Activated naive CD4-positive, alpha-beta T cell treated with anti-CD3 and anti-CD28 coated beads, Interleukin-2, amount 10 ng/mL, durations not matched to agents 7 days and 5 days (primary cell): ENCODE measurements at regions of chr10 and their contacts with region 1.

Region 1: DNA sequence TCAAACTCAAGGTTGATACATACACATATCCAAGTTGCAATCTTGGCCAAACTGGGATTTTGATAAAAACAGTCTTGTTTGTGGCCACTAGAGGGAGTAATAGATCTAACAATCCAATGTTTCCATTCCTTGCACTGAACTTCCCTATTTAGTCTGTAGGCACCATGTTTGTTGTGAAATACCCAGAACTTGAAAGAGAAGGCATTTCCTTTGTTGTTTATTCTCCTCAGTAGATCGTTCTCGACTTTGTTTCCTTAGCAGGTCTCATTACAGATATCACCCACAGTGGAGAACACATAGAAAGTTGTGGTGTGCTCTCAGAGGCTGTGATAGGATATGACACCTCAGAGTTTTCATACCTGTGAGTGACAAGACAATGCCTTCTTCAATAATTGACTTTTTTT is 70.3 kb upstream of the MXI1 start:
- DNase-seq: no peak
- H3K4me3 Mint-ChIP-seq: no peak overlapping the region
- H3K27ac Mint-ChIP-seq: peak overlapping the region; percentile 31
- H3K4me1 Mint-ChIP-seq: peaks cover 39% of the 10 kb centered on the region
- H3K27me3 Mint-ChIP-seq: no peaks in the 10 kb centered on the region

Region 2: GRCh38 chr10:109883859-109884771 is 253.0 kb before region 1 on chr10:
- CTCF ChIA-PET with region 1: interaction called, 10 read pairs
- DNase-seq: peak; percentile 71
- H3K4me3 Mint-ChIP-seq: no peak overlapping the region
- H3K27ac Mint-ChIP-seq: no peak overlapping the region
- H3K4me1 Mint-ChIP-seq: peaks cover 9% of the 10 kb centered on the region
- H3K27me3 Mint-ChIP-seq: no peaks in the 10 kb centered on the region

Region 3: DNA sequence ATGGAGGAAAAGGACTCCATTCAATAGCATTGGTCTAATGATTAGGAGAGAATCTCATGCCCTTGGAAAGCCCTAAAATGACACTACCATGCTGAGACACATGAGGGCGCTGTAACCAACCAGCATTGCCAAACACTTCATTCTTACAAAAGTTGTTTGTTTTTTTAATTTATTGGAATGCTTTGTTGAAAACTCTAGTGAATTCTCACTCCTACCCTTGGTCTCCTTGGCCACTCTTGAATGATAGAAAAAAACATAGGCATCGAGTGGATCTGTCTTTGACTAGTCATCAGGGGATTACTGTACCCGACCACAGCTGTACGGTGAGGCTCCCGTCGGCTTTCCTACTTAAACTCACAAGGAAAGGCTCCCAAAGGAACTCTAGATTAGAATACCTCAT is 158.7 kb before region 1 on chr10:
- CTCF ChIA-PET with region 1: interaction called, 16 read pairs
- DNase-seq: peak; percentile 77
- H3K4me3 Mint-ChIP-seq: no peak overlapping the region
- H3K27ac Mint-ChIP-seq: no peak overlapping the region
- H3K4me1 Mint-ChIP-seq: peaks cover 8% of the 10 kb centered on the region
- H3K27me3 Mint-ChIP-seq: peaks cover 6% of the 10 kb centered on the region

Region 4: GRCh38 chr10:110210674-110211464 is 73.7 kb after region 1 on chr10:
- CTCF ChIA-PET with region 1: interaction called, 30 read pairs
- DNase-seq: peak; percentile 95
- H3K4me3 Mint-ChIP-seq: peak overlapping the region; percentile 93
- H3K27ac Mint-ChIP-seq: peak overlapping the region; percentile 97
- H3K4me1 Mint-ChIP-seq: peaks cover 62% of the 10 kb centered on the region
- H3K27me3 Mint-ChIP-seq: peaks cover 20% of the 10 kb centered on the region

Region 5: GRCh38 chr10:110225756-110226542 is 88.8 kb after region 1 on chr10:
- CTCF ChIA-PET with region 1: interaction called, 12 read pairs
- DNase-seq: peak; percentile 90
- H3K4me3 Mint-ChIP-seq: peak overlapping the region; percentile 92
- H3K27ac Mint-ChIP-seq: peak overlapping the region; percentile 97
- H3K4me1 Mint-ChIP-seq: peaks cover 54% of the 10 kb centered on the region
- H3K27me3 Mint-ChIP-seq: peaks cover 31% of the 10 kb centered on the region

Region 6: GRCh38 chr10:110279407-110279986 is 142.4 kb after region 1 on chr10:
- CTCF ChIA-PET with region 1: interaction called, 61 read pairs
- DNase-seq: peak; percentile 59
- H3K4me3 Mint-ChIP-seq: no peak overlapping the region
- H3K27ac Mint-ChIP-seq: no peak overlapping the region
- H3K4me1 Mint-ChIP-seq: peaks cover 12% of the 10 kb centered on the region
- H3K27me3 Mint-ChIP-seq: no peaks in the 10 kb centered on the region